Activated CD4-positive, alpha-beta T cell treated with anti-CD3 and anti-CD28 coated beads for 36 hours (primary cell): ENCODE measurements at regions of chr19 and their contacts with region 1.

Region 1: GRCh38 chr19:15332311-15332996 is at the start of gene BRD4:
- DNase-seq: peak; percentile 87
- ATAC-seq: peak; percentile 43
- H3K4me3 Mint-ChIP-seq: peak within 1 kb of the TSS; percentile 94
- H3K27ac Mint-ChIP-seq: peak within 1 kb of the TSS; percentile 96
- H3K4me1 Mint-ChIP-seq: peaks cover 38% of the 10 kb centered on the region
- H3K27me3 Mint-ChIP-seq: no peaks in the 10 kb centered on the region
- total RNA-seq, gene BRD4: 106 to 126 TPM

Region 2: GRCh38 chr19:15280915-15281683 is 51.4 kb before region 1 on chr19:
- CTCF ChIA-PET with region 1: no interaction called
- POLR2A ChIA-PET with region 1: interaction called, 4 read pairs
- intact Hi-C with region 1: loop called in 1 of 2 experiments (anchors 2 kb)
- DNase-seq: no peak
- ATAC-seq: no peak
- H3K4me3 Mint-ChIP-seq: no peak overlapping the region
- H3K27ac Mint-ChIP-seq: peak overlapping the region; percentile 84
- H3K4me1 Mint-ChIP-seq: peaks cover 89% of the 10 kb centered on the region
- H3K27me3 Mint-ChIP-seq: no peaks in the 10 kb centered on the region

Region 3: GRCh38 chr19:15304140-15304705 is 28.2 kb before region 1 on chr19:
- CTCF ChIA-PET with region 1: interaction called, 5 read pairs
- POLR2A ChIA-PET with region 1: interaction called, 5 read pairs
- intact Hi-C with region 1: loop called (anchors 1 to 2 kb)
- DNase-seq: peak; percentile 76
- ATAC-seq: peak; percentile 65
- H3K4me3 Mint-ChIP-seq: peak overlapping the region; percentile 52
- H3K27ac Mint-ChIP-seq: peak overlapping the region; percentile 95
- H3K4me1 Mint-ChIP-seq: peaks cover 81% of the 10 kb centered on the region
- H3K27me3 Mint-ChIP-seq: no peaks in the 10 kb centered on the region

Region 4: GRCh38 chr19:15432629-15433518 is 100.4 kb after region 1 on chr19:
- CTCF ChIA-PET with region 1: no interaction called
- POLR2A ChIA-PET with region 1: no interaction called
- intact Hi-C with region 1: loop called in 1 of 2 experiments (anchors 5 kb)
- DNase-seq: peak; percentile 97
- ATAC-seq: peak; percentile 87
- H3K4me3 Mint-ChIP-seq: peak overlapping the region; percentile 87
- H3K27ac Mint-ChIP-seq: peak overlapping the region; percentile 91
- H3K4me1 Mint-ChIP-seq: peaks cover 26% of the 10 kb centered on the region
- H3K27me3 Mint-ChIP-seq: no peaks in the 10 kb centered on the region

Region 5: DNA sequence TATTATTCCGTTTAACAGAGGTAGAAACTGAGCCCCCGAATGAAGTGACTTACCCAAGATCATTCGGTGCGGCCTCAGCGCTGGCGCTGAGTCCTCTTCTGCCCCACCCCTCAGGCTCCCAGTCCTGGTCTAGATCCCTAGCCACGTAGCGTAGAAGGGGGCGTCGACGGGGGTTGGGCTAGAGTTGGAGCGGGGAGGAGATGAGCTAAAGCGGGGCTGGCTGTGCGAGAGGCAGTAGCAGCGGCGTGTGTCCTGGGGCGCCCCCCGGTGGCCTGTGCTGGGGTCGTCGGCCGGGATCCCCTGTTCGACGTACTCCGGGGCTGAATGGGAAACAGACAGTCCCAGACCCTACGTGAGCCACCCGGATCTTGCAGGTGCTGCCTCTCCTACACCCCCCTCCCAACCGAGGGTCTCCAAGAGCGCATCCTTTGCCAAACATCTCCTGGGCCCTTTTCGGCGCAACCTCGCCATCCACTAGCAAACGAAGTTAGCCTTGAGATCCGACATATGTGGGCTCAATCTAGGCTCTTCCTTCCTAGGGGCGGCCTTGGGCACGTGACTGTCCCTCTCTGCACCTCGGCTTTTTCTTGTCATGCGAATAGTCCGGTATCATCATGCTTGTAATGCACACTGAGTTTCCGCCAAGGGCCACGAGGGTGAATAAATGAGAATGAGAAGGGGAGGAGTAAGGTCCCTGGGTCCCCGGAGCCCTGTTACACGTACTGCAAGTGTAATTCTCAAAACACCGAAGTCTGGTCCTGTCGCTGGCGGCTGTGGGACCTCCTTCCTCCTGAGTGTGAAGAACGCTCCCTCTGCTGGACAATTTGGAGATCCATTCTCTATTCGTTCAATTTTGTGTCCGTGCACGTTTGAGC is 223.5 kb after region 1 on chr19:
- CTCF ChIA-PET with region 1: interaction called, 4 read pairs
- POLR2A ChIA-PET with region 1: interaction called, 3 read pairs
- intact Hi-C with region 1: loop called in 1 of 2 experiments (anchors 1 kb)
- DNase-seq: peak; percentile 99
- ATAC-seq: peak; percentile 86
- H3K4me3 Mint-ChIP-seq: peak overlapping the region; percentile 73
- H3K27ac Mint-ChIP-seq: peak overlapping the region; percentile 85
- H3K4me1 Mint-ChIP-seq: peaks cover 18% of the 10 kb centered on the region
- H3K27me3 Mint-ChIP-seq: peaks cover 2% of the 10 kb centered on the region

Region 6: GRCh38 chr19:16382775-16383543 is 1050.5 kb after region 1 on chr19:
- CTCF ChIA-PET with region 1: no interaction called
- POLR2A ChIA-PET with region 1: no interaction called
- intact Hi-C with region 1: no loop called
- DNase-seq: peak; percentile 86
- ATAC-seq: peak; percentile 74
- H3K4me3 Mint-ChIP-seq: no peak overlapping the region
- H3K27ac Mint-ChIP-seq: peak overlapping the region; percentile 58
- H3K4me1 Mint-ChIP-seq: peaks cover 40% of the 10 kb centered on the region
- H3K27me3 Mint-ChIP-seq: no peaks in the 10 kb centered on the region